Activated CD4-positive, alpha-beta memory T cell treated with anti-CD3 and anti-CD28 coated beads for 36 hours (primary cell): ENCODE measurements at regions of chr18 and their contacts with region 1.

Region 1: DNA sequence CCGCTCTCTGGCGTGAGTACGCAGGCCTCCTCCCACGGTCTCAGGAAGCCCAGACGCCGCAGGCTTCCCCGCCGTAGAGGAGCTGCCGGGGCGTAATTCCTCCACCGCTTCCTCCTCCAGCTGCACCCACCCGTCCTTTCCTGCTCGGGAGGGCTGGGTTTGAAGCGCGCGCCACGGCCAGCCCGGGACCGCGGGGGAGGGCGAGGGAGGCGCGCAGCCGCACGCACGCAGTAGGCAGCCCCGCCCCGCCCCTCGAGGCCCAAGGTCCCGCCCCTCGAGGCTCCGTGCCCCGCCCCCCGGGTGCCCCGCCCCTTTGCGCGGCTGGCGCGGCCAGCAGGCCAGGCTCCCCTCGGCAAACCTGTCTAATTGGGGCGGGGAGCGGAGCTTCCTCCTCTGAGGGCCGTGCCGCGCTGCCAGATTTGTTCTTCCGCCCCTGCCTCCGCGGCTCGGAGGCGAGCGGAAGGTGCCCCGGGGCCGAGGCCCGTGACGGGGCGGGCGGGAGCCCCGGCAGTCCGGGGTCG is at the start of gene MALT1:
- DNase-seq: peak; percentile 96
- H3K4me3 Mint-ChIP-seq: peak within 1 kb of the TSS; percentile 95
- H3K27ac Mint-ChIP-seq: peak within 1 kb of the TSS; percentile 92
- H3K4me1 Mint-ChIP-seq: peaks cover 59% of the 10 kb centered on the region
- H3K27me3 Mint-ChIP-seq: no peaks in the 10 kb centered on the region
- total RNA-seq, gene MALT1: 42.5 to 44.3 TPM

Region 2: GRCh38 chr18:58043491-58044379 is 627.4 kb before region 1 on chr18 and contains the start of gene NEDD4L:
- CTCF ChIA-PET with region 1: no interaction called
- POLR2A ChIA-PET with region 1: no interaction called
- intact Hi-C with region 1: loop called (anchors 10 kb)
- DNase-seq: peak; percentile 89
- H3K4me3 Mint-ChIP-seq: peak within 1 kb of the TSS; percentile 86
- H3K27ac Mint-ChIP-seq: peak within 1 kb of the TSS; percentile 26
- H3K4me1 Mint-ChIP-seq: peaks cover 20% of the 10 kb centered on the region
- H3K27me3 Mint-ChIP-seq: peaks cover 25% of the 10 kb centered on the region
- total RNA-seq, gene NEDD4L: 3.4 to 3.8 TPM

Region 3: DNA sequence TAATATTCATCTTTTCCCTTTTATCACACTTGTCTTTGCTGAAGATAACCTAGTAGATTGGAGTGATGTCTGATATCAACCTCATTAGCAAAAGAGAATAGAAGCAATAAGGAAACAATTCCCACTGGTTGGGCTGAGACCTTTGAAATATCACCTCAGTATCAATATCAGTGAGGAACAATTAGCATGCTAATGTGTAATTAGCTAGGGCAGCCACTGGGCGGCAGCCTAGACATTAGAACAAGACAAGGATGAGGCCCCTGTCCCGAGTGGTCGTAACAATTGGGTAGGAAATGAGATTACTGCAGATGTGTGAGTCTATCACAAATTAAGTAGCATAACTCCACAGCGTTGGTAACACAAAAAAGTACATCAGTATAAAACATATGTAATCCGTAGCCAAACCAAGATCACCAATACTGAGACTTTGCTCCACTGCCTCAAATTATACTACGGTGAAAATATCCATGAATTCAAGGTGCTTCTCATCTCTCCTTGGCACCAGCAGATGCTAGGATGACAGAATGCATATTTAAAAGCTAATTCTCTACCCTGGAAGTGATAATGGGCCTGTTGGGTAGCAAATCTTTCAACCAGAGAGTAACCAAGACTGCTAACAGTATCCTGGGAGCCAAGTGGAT is 141.3 kb before region 1 on chr18:
- CTCF ChIA-PET with region 1: interaction called, 26 read pairs
- POLR2A ChIA-PET with region 1: interaction called, 7 read pairs
- intact Hi-C with region 1: no loop called
- DNase-seq: peak; percentile 76
- H3K4me3 Mint-ChIP-seq: no peak overlapping the region
- H3K27ac Mint-ChIP-seq: peak overlapping the region; percentile 43
- H3K4me1 Mint-ChIP-seq: peaks cover 19% of the 10 kb centered on the region
- H3K27me3 Mint-ChIP-seq: peaks cover 6% of the 10 kb centered on the region

Region 4: DNA sequence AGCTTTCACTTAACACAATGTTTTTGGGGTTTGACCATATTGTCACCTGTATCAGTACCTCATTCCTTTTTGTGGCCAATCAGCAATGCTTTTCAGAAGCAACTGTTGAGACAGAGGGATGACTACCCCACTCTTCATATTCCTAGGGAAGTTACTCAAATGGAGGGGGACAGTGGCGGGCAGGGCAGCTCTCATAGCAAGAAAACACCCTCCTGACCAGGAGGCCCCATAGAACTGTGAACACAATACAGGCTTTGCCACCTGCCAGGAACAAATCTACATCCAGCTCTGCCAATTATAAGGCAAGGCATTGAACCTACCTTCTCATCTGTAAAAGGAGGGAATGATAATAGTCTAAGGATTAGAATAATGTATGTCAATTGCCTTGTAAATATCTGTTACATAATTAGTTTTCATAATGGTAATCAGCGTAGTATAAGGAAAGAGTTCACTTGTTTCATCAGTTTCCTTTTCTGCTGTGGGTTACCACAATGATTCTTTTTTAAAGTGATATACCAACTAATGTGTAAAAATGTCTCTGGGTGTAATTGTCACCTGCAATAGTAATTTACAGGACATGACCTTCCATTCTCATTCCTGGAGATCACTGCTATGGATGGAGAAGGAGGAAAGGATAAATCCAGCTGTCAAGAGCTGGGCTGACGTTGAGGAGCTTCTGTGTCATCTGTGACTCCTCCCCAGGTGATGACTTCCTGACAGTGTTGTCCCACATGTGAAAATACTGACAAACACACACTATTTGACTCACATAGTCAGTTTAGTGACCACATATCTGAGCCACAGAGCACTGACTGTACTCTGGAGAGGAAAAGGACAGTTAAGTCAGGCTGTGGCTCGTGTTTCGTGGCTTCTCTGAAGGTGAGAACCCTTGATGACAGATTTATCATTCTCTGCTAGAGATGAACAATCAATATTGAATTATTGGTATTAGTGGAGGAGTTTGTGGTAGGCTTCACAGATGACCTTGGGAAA is 55.7 kb before region 1 on chr18:
- CTCF ChIA-PET with region 1: interaction called, 5 read pairs
- POLR2A ChIA-PET with region 1: interaction called, 20 read pairs
- intact Hi-C with region 1: loop called (anchors 1 kb)
- DNase-seq: peak; percentile 87
- H3K4me3 Mint-ChIP-seq: peak overlapping the region; percentile 51
- H3K27ac Mint-ChIP-seq: peak overlapping the region; percentile 90
- H3K4me1 Mint-ChIP-seq: peaks cover 54% of the 10 kb centered on the region
- H3K27me3 Mint-ChIP-seq: peaks cover 4% of the 10 kb centered on the region

Region 5: GRCh38 chr18:58682429-58683069 is 11.4 kb after region 1 on chr18:
- CTCF ChIA-PET with region 1: interaction called, 6 read pairs
- POLR2A ChIA-PET with region 1: interaction called, 20 read pairs
- intact Hi-C with region 1: no loop called
- DNase-seq: no peak
- H3K4me3 Mint-ChIP-seq: no peak overlapping the region
- H3K27ac Mint-ChIP-seq: no peak overlapping the region
- H3K4me1 Mint-ChIP-seq: peaks cover 57% of the 10 kb centered on the region
- H3K27me3 Mint-ChIP-seq: no peaks in the 10 kb centered on the region

Region 6: GRCh38 chr18:58761241-58761969 is 90.2 kb after region 1 on chr18:
- CTCF ChIA-PET with region 1: interaction called, 37 read pairs
- POLR2A ChIA-PET with region 1: interaction called, 6 read pairs
- intact Hi-C with region 1: loop called (anchors 5 kb)
- DNase-seq: peak; percentile 41
- H3K4me3 Mint-ChIP-seq: no peak overlapping the region
- H3K27ac Mint-ChIP-seq: no peak overlapping the region
- H3K4me1 Mint-ChIP-seq: peaks cover 18% of the 10 kb centered on the region
- H3K27me3 Mint-ChIP-seq: peaks cover 13% of the 10 kb centered on the region

Region 7: GRCh38 chr18:58806826-58807714 is 135.9 kb after region 1 on chr18:
- CTCF ChIA-PET with region 1: no interaction called
- POLR2A ChIA-PET with region 1: no interaction called
- intact Hi-C with region 1: no loop called
- DNase-seq: peak; percentile 14
- H3K4me3 Mint-ChIP-seq: no peak overlapping the region
- H3K27ac Mint-ChIP-seq: no peak overlapping the region
- H3K4me1 Mint-ChIP-seq: peaks cover 6% of the 10 kb centered on the region
- H3K27me3 Mint-ChIP-seq: peaks cover 18% of the 10 kb centered on the region

Region 8: DNA sequence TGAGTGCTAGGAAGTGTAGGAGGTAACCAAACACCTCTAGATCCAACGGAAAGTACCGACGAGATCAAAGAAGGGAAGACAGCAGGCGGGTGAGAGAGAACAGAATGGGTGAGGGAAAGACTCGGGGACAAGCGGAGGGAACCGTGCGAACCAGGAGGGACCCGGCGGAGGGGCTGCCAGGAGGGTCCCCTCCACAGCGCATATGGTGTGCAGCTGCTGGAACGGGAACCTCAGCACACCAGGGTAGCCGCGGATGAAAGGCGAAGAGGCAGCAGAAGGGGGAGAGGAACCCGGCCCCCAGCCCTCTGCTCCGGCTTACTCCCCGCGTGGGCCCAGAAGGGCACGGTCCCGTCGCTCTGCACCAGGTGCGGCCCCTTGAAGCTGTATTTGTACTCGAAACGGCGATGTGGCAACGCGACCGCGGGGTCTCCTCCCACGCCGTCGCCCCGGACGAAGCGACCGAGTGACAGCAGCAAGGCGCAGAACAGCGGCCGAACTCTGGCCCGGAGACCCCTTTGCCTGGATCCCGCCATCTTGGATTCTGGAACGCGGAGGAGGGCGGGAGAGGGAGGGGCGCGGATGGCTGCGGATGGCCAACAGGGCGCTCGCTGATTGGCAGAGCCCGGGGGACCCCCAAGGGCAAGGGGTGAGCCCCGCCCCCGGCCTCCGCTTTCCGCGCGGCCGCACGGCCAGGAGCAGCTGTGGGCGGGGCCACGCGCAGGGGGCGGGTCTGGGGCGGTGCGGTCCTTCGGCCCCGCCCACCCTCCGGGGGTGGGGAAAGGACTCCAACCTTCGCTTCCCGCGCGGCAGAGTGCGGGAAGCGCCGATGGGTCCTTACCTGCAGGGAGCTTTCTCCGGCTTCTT is 687.8 kb after region 1 on chr18 and contains the start of gene LMAN1:
- CTCF ChIA-PET with region 1: no interaction called
- POLR2A ChIA-PET with region 1: interaction called, 3 read pairs
- intact Hi-C with region 1: loop called (anchors 2 kb)
- DNase-seq: peak; percentile 97
- H3K4me3 Mint-ChIP-seq: peak within 1 kb of the TSS; percentile 83
- H3K27ac Mint-ChIP-seq: peak within 1 kb of the TSS; percentile 94
- H3K4me1 Mint-ChIP-seq: peaks cover 26% of the 10 kb centered on the region
- H3K27me3 Mint-ChIP-seq: no peaks in the 10 kb centered on the region
- total RNA-seq, gene LMAN1: 155 to 158 TPM